HAP-1 (cell line): ENCODE measurements at regions of chr4 and their contacts with region 1.

Region 1: GRCh38 chr4:110631584-110632505 is 9.0 kb upstream of the PITX2 start:
- DNase-seq: peak; percentile 90 to 91
- H3K4me3 ChIP-seq: peak overlapping the region; percentile 18
- H3K4me1 ChIP-seq: peaks cover 3% of the 10 kb centered on the region; the same call in 1 of the 2 replicates
- H3K27me3 ChIP-seq: no peaks in the 10 kb centered on the region

Region 2: GRCh38 chr4:110963662-110964280 is 331.9 kb after region 1 on chr4:
- in situ Hi-C with region 1: loop called (anchors 10 kb)
- DNase-seq: no peak
- H3K4me3 ChIP-seq: no peak overlapping the region
- H3K4me1 ChIP-seq: peaks cover 8% of the 10 kb centered on the region
- H3K27me3 ChIP-seq: no peaks in the 10 kb centered on the region

Region 3: GRCh38 chr4:111283061-111283677 is 651.3 kb after region 1 on chr4:
- in situ Hi-C with region 1: loop called (anchors 25 kb)
- DNase-seq: peak; percentile 45 to 79
- H3K4me3 ChIP-seq: no peak overlapping the region
- H3K4me1 ChIP-seq: no peaks in the 10 kb centered on the region
- H3K27me3 ChIP-seq: no peaks in the 10 kb centered on the region; the same call in 1 of the 2 replicates

Region 4: GRCh38 chr4:111631215-111631999 is 999.6 kb after region 1 on chr4:
- in situ Hi-C with region 1: loop called (anchors 5 kb)
- DNase-seq: peak in 1 of 2 experiments; percentile 59
- H3K4me3 ChIP-seq: no peak overlapping the region
- H3K4me1 ChIP-seq: peaks cover 8% of the 10 kb centered on the region
- H3K27me3 ChIP-seq: peaks cover 7% of the 10 kb centered on the region; the same call in 1 of the 2 replicates